ENCODE measurements at regions of chr3 and their contacts with region 1.

Region 1: GRCh38 chr3:10744098-10744465 is 71.9 kb upstream of the SLC6A11 start:
- DNase-seq: no peak
- H3K4me3 ChIP-seq: no peak overlapping the region
- H3K27ac ChIP-seq: no peak overlapping the region
- H3K4me1 ChIP-seq: no peaks in the 10 kb centered on the region
- H3K27me3 ChIP-seq: no peaks in the 10 kb centered on the region
- CTCF ChIP-seq: no peak
- POLR2A ChIP-seq: no peak

Region 2: GRCh38 chr3:10344147-10344943 is 399.7 kb before region 1 on chr3:
- intact Hi-C with region 1: loop called (anchors 10 kb)
- DNase-seq: peak; percentile 31 to 39
- H3K4me3 ChIP-seq: no peak overlapping the region
- H3K27ac ChIP-seq: no peak overlapping the region
- H3K4me1 ChIP-seq: no peaks in the 10 kb centered on the region
- H3K27me3 ChIP-seq: no peaks in the 10 kb centered on the region
- CTCF ChIP-seq: peak; percentile 66 to 84 (median 72)
- POLR2A ChIP-seq: no peak

Measured in uterus (tissue), 4 donors.